ENCODE measurements at regions of chr3 and their contacts with region 1.

Region 1: GRCh38 chr3:183895296-183895695 is 10.6 kb upstream of the PARL start:
- DNase-seq: peak; percentile 51
- H3K4me3 Mint-ChIP-seq: no peak overlapping the region
- H3K27ac Mint-ChIP-seq: no peak overlapping the region
- H3K4me1 Mint-ChIP-seq: peaks cover 10% of the 10 kb centered on the region
- H3K27me3 Mint-ChIP-seq: peaks cover 30% of the 10 kb centered on the region
- CTCF ChIP-seq: peak; percentile 94

Region 2: DNA sequence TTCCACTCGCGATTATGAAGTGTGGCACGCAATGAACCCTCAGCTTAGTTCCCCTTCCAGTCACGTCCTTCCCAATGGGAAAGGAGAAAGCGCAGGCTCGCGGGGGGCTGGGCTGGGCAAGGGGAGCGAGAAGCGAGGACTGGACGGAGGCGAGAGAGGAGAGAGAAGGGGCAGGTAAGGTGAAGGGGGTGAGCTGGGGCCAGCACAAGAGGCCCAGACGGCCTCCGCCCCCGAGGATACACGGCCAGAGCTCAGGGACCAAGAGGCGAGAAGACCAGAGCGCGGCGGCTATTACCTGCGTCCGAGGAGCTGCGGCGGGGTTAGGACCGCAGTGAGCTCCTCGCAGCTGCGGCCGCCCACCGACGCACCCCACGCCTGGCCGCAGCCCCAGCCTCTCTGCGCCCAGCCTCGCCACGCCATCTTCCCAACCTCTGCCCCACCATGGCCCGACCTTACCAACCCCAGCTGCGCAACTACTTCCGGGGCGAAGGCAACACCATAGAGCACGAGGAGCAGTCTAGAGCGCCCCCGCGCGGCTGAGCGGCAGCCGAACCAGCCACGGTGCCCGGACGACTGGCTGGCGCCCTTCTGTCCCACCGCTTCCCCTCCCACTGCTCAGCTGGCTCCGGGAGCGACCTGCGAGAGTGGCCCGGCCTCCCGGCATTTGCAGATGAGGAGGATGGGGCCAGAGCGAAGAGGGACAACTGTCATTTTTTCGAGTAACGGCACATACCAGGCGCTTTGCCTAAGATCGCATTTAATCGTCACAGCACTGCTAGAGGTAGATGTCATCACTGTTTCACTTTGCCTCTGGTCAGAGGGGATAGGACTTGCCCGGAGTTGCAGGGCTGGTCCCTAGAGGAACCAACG is 10.6 kb before region 1 on chr3 and contains the start of gene PARL:
- CTCF ChIA-PET with region 1: interaction called, 14 read pairs
- intact Hi-C with region 1: no loop called
- DNase-seq: peak; percentile 100
- H3K4me3 Mint-ChIP-seq: peak within 1 kb of the TSS; percentile 99
- H3K27ac Mint-ChIP-seq: peak within 1 kb of the TSS; percentile 89
- H3K4me1 Mint-ChIP-seq: peaks cover 14% of the 10 kb centered on the region
- H3K27me3 Mint-ChIP-seq: peaks cover 19% of the 10 kb centered on the region
- CTCF ChIP-seq: peak; percentile 97
- total RNA-seq, gene PARL: 80.4 and 84.3 TPM in 2 replicates

Region 3: DNA sequence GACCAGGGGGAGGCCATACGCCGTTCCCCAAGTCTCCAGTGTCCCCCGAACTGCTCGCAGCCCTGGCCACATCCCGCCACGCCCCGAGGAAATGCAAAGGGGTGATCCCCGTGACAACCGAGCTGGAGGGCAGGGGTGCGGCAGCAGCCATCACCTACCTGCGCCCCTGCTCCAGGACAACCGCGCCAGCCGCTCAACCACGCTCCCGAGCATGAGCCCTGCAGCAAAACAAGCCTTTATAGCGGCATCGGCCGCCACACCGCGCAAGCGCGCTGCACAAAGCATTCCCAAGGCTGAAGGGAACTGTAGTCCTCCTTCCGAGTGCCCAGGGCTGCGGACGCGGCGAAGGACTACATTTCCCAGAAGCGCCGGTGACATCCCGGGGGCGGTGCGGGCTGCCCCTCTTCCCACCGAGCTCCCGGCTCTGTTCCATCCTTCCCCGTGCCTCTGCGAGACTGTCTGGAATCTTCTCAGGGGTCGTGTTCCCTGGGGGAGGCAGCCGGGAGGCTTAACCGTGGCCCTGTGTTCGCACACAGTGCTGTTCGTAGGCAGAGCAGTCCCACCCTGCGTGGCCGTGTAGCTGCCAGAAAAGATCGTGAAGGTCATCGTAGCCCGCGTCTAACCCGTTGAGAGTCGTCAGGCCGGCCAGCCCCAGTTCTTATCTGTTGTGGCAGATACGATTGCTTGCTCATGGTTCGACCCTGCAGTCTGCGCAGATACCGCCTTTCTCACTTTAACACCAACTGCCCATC is 122.6 kb after region 1 on chr3 and contains the start of gene ABCC5:
- CTCF ChIA-PET with region 1: interaction called, 39 read pairs
- intact Hi-C with region 1: loop called (anchors 2 kb)
- DNase-seq: peak; percentile 95
- H3K4me3 Mint-ChIP-seq: peak within 1 kb of the TSS; percentile 100
- H3K27ac Mint-ChIP-seq: peak within 1 kb of the TSS; percentile 77
- H3K4me1 Mint-ChIP-seq: peaks cover 31% of the 10 kb centered on the region
- H3K27me3 Mint-ChIP-seq: peaks cover 22% of the 10 kb centered on the region
- CTCF ChIP-seq: peak; percentile 54
- total RNA-seq, gene ABCC5: 33.8 and 39.1 TPM in 2 replicates

Region 4: DNA sequence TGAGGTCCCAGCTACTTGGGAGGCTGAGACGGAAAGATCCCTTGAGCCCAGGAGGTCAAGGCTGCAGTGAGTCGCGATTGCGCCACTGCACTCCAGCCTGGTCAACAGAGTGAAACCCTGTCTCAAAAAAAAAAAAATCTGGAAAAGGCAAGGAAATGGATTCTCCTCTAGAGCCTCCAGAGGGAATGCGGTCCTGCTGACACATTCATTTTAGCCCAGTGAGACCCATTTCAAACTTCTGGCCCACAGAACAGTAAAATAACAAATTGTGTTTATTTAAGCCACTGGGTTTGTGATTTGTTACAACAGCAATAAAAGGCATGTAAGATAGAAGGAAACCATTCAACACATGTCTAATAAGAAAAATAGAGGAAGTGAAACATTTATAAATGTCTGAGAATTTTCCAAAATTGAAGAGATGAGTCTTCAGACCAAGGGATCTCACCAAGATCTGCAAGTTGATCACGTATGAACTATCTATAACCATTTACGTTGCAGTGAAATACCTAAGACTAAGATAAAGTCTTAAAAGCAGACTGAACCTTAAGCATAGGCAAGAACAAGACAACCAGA is 201.6 kb after region 1 on chr3 and contains the start of gene HTR3E:
- CTCF ChIA-PET with region 1: no interaction called
- intact Hi-C with region 1: no loop called
- DNase-seq: no peak
- H3K4me3 Mint-ChIP-seq: no peak within 1 kb of the TSS
- H3K27ac Mint-ChIP-seq: no peak within 1 kb of the TSS
- H3K4me1 Mint-ChIP-seq: no peaks in the 10 kb centered on the region
- H3K27me3 Mint-ChIP-seq: peaks cover 28% of the 10 kb centered on the region
- CTCF ChIP-seq: no peak
- total RNA-seq, gene HTR3E: not detected in 2 replicates

Region 5: DNA sequence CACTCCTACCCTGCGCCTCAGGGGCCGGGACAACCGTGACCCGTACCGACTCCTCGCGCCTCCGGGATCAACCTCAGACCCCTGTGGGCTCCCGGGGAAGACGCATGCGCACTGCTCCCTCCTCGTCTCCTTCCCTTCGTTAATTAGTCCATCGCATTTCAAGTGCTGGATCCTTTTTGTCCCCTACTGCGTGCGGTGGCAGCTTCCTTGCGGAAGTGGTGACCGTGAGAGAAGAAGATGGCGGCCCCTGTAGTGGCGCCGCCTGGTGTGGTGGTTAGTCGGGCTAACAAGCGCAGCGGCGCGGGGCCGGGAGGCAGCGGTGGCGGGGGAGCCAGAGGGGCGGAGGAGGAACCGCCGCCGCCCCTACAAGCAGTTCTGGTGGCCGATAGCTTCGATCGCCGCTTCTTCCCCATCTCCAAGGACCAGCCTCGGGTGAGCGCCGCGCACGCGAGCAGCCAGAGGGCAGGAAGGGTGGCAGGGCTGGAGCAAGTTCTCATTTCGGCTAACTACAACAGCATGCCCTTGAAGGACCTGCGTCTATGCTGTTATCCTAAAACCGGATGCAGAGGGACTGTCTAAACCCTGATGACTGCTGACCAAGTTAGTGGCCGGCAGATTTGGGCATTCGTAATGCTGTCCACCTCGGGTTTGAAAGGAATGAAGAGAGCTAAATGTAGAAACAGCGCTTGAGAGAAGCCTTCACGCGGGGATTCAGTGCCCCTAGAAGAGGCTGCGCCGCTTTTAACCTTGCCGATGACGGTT is 240.0 kb after region 1 on chr3 and contains the start of gene EIF2B5:
- CTCF ChIA-PET with region 1: interaction called, 13 read pairs
- intact Hi-C with region 1: loop called (anchors 5 kb)
- DNase-seq: peak; percentile 95
- H3K4me3 Mint-ChIP-seq: peak within 1 kb of the TSS; percentile 99
- H3K27ac Mint-ChIP-seq: peak within 1 kb of the TSS; percentile 94
- H3K4me1 Mint-ChIP-seq: peaks cover 36% of the 10 kb centered on the region
- H3K27me3 Mint-ChIP-seq: no peaks in the 10 kb centered on the region
- CTCF ChIP-seq: peak; percentile 11
- total RNA-seq, gene EIF2B5: 79.6 and 87.9 TPM in 2 replicates

Region 6: GRCh38 chr3:184241447-184242296 is 346.4 kb after region 1 on chr3:
- CTCF ChIA-PET with region 1: interaction called, 10 read pairs
- intact Hi-C with region 1: loop called (anchors 2 kb)
- DNase-seq: peak; percentile 94
- H3K4me3 Mint-ChIP-seq: peak overlapping the region; percentile 56
- H3K27ac Mint-ChIP-seq: no peak overlapping the region
- H3K4me1 Mint-ChIP-seq: no peaks in the 10 kb centered on the region
- H3K27me3 Mint-ChIP-seq: peaks cover 39% of the 10 kb centered on the region
- CTCF ChIP-seq: peak; percentile 94

Region 7: DNA sequence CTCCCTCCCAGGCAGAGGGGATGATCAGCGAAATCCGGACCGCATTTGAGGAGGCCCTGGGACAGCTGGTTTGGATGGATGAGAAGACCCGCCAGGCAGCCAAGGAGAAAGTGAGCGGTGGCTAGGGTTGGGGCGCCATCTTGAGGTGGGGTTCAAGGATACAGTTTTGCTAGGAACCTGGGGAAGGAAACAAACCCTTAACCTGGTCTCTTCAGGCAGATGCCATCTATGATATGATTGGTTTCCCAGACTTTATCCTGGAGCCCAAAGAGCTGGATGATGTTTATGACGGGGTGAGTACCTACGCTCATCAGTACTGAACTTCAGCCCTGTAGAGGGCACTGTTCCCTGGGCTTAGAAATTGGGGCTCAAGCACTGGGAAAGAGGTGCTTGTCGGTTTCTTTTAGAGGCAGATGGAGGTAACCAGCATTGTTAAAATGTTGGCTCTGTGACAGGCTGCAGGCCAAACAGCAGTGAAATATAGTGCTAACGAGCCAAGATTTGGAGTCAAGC is 394.2 kb after region 1 on chr3:
- CTCF ChIA-PET with region 1: interaction called, 9 read pairs
- intact Hi-C with region 1: loop called (anchors 2 kb)
- DNase-seq: peak; percentile 90
- H3K4me3 Mint-ChIP-seq: no peak overlapping the region
- H3K27ac Mint-ChIP-seq: no peak overlapping the region
- H3K4me1 Mint-ChIP-seq: no peaks in the 10 kb centered on the region
- H3K27me3 Mint-ChIP-seq: peaks cover 72% of the 10 kb centered on the region
- CTCF ChIP-seq: peak; percentile 97

Measured in Calu3 (cell line).